CD14-positive monocyte (primary cell): ENCODE measurements at regions of chr1 and their contacts with region 1.

Region 1: GRCh38 chr1:153572569-153573015 is 6.9 kb upstream of the S100A2 start:
- DNase-seq: peak; percentile 55 to 74 (median 67)
- H3K4me3 ChIP-seq: peak overlapping the region in 1 of 3 experiments; percentile 19
- H3K4me3 Mint-ChIP-seq: no peak overlapping the region
- H3K27ac ChIP-seq: peak overlapping the region; percentile 59 to 66
- H3K27ac Mint-ChIP-seq: peak overlapping the region; percentile 76 to 92 (median 87)
- H3K4me1 ChIP-seq: peaks cover 44 to 47% of the 10 kb centered on the region in 2 donors
- H3K4me1 Mint-ChIP-seq: peaks cover 49% of the 10 kb centered on the region
- H3K27me3 ChIP-seq: no peaks in the 10 kb centered on the region
- H3K27me3 Mint-ChIP-seq: peaks cover 0 to 10% (median 2%) of the 10 kb centered on the region in 3 donors
- CTCF ChIP-seq: peak; percentile 78

Region 2: GRCh38 chr1:153365303-153366095 is 207.1 kb before region 1 on chr1:
- intact Hi-C with region 1: loop called in 1 of 2 experiments (anchors 10 kb)
- DNase-seq: peak in 2 of 3 donors; percentile 47 to 74
- H3K4me3 ChIP-seq: peak overlapping the region in 1 of 3 experiments; percentile 24
- H3K4me3 Mint-ChIP-seq: peak overlapping the region; percentile 13 to 19
- H3K27ac ChIP-seq: peak overlapping the region; percentile 78 to 85
- H3K27ac Mint-ChIP-seq: peak overlapping the region; percentile 68 to 98 (median 94)
- H3K4me1 ChIP-seq: peaks cover 97 to 100% of the 10 kb centered on the region in 2 donors
- H3K4me1 Mint-ChIP-seq: peaks cover 99% of the 10 kb centered on the region
- H3K27me3 ChIP-seq: no peaks in the 10 kb centered on the region
- H3K27me3 Mint-ChIP-seq: peaks cover 0 to 1% (median 0%) of the 10 kb centered on the region in 3 donors
- CTCF ChIP-seq: no peak

Region 3: DNA sequence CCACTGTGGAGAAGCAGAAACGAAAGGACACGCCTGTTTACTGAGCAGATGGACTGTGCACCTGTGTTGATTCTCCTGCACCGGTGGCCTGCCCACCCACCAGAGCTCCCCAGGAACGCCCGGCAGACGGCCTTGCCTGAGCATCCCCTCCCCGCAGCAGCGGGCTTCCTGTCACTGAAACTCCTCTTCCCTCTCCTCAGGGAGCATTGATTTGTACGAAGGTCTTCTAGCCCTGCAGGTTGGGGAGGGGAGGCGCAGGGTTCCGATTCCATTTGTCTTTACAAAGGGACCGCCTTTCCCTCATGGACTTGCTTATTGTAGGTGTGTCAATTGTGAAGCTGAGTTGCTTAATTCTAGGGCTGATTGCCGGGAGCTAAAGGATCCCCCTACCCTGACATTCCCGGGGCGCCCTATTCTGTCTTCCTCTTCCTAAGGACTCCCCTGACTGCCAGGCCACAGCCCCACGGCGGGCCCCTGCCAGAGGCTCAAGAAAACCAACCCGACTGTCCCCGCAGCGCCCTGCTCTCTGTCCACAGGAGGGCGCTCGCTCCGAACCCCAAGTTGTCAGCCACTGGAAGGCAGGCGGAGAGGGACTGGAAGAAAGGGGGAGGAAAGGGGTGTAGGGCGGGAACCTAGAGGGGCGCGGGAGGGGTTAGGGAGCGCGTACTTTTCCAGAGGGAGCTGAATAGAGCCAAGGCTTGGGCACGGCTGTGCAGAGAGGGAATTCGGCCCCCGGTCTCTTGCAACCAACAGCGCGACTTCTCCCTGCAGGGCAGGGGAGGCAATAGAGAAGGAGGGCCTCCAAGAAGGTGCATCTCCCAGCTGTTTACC is 39.6 kb before region 1 on chr1:
- intact Hi-C with region 1: loop called (anchors 1 kb)
- DNase-seq: peak; percentile 80 to 83 (median 80)
- H3K4me3 ChIP-seq: peak overlapping the region; percentile 70 to 91 (median 84)
- H3K4me3 Mint-ChIP-seq: peak overlapping the region; percentile 93 to 97
- H3K27ac ChIP-seq: peak overlapping the region; percentile 96 to 98
- H3K27ac Mint-ChIP-seq: peak overlapping the region; percentile 94 to 99 (median 96)
- H3K4me1 ChIP-seq: peaks cover 54 to 61% of the 10 kb centered on the region in 2 donors
- H3K4me1 Mint-ChIP-seq: peaks cover 61% of the 10 kb centered on the region
- H3K27me3 ChIP-seq: no peaks in the 10 kb centered on the region
- H3K27me3 Mint-ChIP-seq: peaks cover 0 to 2% (median 0%) of the 10 kb centered on the region in 3 donors
- CTCF ChIP-seq: peak; percentile 89

Region 4: DNA sequence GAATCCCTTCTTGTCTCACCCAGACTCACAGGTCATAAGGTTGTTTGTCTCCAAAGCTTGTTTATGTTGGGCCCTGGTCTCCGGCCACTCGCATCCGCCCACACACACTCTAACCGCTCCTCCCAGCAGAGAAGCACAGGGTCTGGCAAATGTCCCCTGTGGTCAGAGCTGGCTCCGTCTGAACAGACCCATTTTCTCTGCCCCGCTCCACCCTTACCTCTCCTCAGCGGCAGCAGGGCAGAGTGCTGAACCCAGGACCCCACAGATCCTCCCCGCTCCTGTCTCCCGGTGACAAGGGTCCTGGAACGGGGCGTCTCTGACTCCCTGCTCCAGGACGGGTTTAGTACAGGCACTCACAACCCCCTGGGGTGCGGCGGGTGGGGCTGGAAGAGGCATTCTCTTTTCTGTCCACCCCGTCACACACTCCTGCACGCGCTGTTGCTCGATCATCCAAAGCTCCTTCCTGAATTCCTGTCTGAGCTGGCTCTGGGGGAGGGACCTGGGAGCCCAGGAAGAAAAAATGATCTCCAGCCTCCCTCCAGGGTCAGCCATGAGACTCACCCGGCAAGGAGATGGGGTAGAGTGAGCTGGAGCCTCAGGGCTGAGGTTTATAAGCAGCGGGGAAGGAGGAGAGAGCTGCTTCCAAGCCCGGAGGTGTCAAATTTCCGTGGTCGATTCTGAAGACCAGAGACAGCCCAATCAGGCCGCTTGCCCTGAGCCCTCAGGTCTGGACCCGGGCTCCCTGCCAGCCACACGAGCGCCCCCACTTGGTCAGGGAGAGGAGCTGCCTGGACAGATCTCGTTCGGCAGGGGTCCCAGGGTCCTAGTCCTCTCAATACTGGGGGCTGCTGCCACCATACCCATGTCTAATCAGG is 54.6 kb after region 1 on chr1 and contains the start of gene S100A13:
- intact Hi-C with region 1: loop called in 1 of 2 experiments (anchors 10 kb)
- DNase-seq: peak in 2 of 3 donors; percentile 11 to 31
- H3K4me3 ChIP-seq: peak within 1 kb of the TSS in 2 of 3 experiments; percentile 6 to 54
- H3K4me3 Mint-ChIP-seq: peak within 1 kb of the TSS; percentile 50 to 87
- H3K27ac ChIP-seq: no peak within 1 kb of the TSS
- H3K27ac Mint-ChIP-seq: peak within 1 kb of the TSS in 3 of 7 donors; percentile 21 to 74 (median 36)
- H3K4me1 ChIP-seq: peaks cover 41 to 51% of the 10 kb centered on the region in 2 donors
- H3K4me1 Mint-ChIP-seq: peaks cover 57% of the 10 kb centered on the region
- H3K27me3 ChIP-seq: peaks cover 0 to 3% of the 10 kb centered on the region in 2 donors
- H3K27me3 Mint-ChIP-seq: peaks cover 11 to 16% (median 14%) of the 10 kb centered on the region in 3 donors
- CTCF ChIP-seq: peak; percentile 58
- polyA plus RNA-seq, gene S100A13: 2.5 to 13.9 (median 2.6) TPM